ENCODE measurements at regions of chr12 and their contacts with region 1.

Region 1: GRCh38 chr12:63843721-63844390 is 644 bp upstream of the SRGAP1 start:
- DNase-seq: peak; percentile 84
- H3K4me3 ChIP-seq: peak overlapping the region; percentile 69 to 93
- H3K27ac ChIP-seq: peak overlapping the region; percentile 81 to 83
- H3K4me1 ChIP-seq: no peaks in the 10 kb centered on the region
- H3K27me3 ChIP-seq: no peaks in the 10 kb centered on the region
- CTCF ChIP-seq: peak; percentile 85 to 99 (median 96)
- POLR2A ChIP-seq: peak; percentile 31

Region 2: DNA sequence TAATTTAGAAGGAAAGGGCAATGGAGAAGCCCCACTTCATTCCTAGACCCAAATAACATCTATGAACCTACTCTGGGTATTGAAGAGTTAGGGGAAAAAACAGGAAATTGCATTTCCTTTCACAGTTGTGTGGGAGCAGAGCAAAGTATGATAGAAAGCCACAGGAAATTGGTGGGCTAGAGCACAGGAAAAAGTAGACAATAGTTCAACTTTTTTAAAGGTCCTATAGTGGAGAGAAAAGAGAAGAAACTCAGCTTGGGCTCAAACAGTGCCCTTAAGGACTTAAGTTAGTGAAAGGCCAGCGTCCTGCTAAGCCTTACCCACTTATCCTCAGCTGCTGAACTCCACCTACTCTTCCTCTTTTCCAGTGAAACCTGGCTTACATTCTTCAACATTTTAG is 433.7 kb before region 1 on chr12:
- intact Hi-C with region 1: no loop called
- DNase-seq: no peak
- H3K4me3 ChIP-seq: no peak overlapping the region
- H3K27ac ChIP-seq: no peak overlapping the region
- H3K4me1 ChIP-seq: no peaks in the 10 kb centered on the region
- H3K27me3 ChIP-seq: no peaks in the 10 kb centered on the region
- CTCF ChIP-seq: no peak
- POLR2A ChIP-seq: no peak

Region 3: GRCh38 chr12:63802012-63802608 is 41.7 kb before region 1 on chr12:
- intact Hi-C with region 1: no loop called
- DNase-seq: no peak
- H3K4me3 ChIP-seq: no peak overlapping the region
- H3K27ac ChIP-seq: no peak overlapping the region
- H3K4me1 ChIP-seq: peaks cover 4% of the 10 kb centered on the region
- H3K27me3 ChIP-seq: no peaks in the 10 kb centered on the region
- CTCF ChIP-seq: peak in 3 of 4 experiments; percentile 44 to 60 (median 58)
- POLR2A ChIP-seq: no peak

Region 4: DNA sequence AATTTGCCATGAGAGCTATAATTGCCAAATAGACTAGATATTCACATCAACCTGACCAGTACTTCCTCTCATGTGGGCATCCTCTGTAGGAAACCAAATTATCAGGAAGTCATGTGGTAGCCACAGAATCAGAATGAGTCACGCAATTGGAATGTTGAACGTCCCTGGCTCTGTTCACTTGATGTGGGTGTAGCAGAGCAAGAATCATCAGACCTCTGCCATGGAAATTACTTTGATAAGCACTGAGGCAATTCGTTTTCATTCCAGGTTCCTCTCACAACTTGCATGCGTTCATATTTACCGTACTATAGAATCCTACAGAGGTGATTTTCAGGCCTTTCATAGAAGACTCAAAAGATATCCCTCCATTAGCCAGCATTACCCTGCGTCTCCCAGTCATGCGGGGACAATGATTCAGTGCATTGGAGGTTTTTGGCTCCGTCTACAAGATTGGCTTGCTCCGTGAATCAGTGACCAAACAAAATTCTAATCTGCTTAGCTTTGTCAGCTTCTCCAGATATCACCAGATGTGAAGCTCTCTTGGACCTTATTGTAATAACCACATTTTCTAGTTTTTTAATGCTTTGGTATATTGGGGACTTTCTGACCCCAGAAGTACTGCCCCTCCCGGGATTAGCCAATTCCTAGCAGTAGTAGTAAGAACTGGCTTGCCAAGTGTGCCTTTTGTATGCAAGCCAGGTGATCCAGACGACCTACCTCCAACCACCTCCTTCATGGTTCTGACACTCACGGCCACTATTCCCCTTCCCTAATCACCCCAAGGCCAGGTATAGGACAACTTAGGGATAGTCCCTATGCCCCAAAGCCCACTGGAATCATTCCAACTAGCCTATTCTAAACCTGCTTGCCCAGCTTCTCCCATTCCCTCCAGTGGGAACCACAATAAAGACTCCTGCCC is 244.8 kb after region 1 on chr12:
- intact Hi-C with region 1: loop called (anchors 10 kb)
- DNase-seq: peak; percentile 71
- H3K4me3 ChIP-seq: no peak overlapping the region
- H3K27ac ChIP-seq: no peak overlapping the region
- H3K4me1 ChIP-seq: peaks cover under 1% of the 10 kb centered on the region
- H3K27me3 ChIP-seq: no peaks in the 10 kb centered on the region
- CTCF ChIP-seq: no peak
- POLR2A ChIP-seq: no peak

Region 5: DNA sequence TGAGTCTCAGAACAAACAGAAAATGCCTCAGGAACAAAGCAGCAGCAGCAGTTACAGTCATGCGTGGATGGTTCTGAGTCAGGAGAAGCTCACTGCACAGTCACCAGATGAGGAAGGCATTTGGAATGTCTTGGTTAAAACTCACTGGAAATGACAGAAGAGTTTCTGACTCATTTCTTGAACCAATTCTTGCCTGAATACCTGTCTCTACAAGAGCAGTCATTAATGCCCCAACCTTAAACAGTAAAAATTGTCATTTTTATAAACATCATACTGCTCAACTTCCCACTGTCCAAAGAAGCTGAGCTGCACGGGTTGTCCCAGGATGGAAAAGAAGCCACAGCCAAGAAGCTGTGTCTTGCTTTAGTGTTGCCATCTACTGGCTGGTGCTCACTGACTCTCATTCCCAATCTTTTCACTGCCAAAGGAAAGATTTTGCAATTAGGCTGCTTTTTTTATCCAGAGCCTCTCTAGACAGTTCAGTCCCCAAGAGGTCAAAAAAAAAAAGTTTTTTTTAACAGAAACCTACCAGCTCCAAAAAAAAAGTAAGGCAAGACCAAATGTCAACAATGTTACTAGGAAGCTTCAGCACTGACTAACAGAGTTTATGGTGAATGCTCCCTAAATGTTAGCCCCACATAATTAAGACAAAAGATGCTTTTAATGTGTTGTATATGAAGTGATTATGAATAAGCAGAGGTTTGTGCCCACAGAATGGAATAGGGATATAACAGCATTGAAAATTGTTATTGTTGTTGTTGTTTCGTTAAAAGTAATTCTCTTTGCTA is 337.8 kb after region 1 on chr12:
- intact Hi-C with region 1: loop called (anchors 1 kb)
- DNase-seq: peak; percentile 67
- H3K4me3 ChIP-seq: no peak overlapping the region
- H3K27ac ChIP-seq: peak overlapping the region in 1 of 2 donors; percentile 8
- H3K4me1 ChIP-seq: no peaks in the 10 kb centered on the region
- H3K27me3 ChIP-seq: no peaks in the 10 kb centered on the region
- CTCF ChIP-seq: peak; percentile 21 to 87 (median 59)
- POLR2A ChIP-seq: no peak

Region 6: GRCh38 chr12:64256166-64256800 is 412.4 kb after region 1 on chr12:
- intact Hi-C with region 1: loop called (anchors 2 kb)
- DNase-seq: peak; percentile 34
- H3K4me3 ChIP-seq: no peak overlapping the region
- H3K27ac ChIP-seq: no peak overlapping the region
- H3K4me1 ChIP-seq: no peaks in the 10 kb centered on the region
- H3K27me3 ChIP-seq: no peaks in the 10 kb centered on the region
- CTCF ChIP-seq: peak; percentile 51 to 83 (median 79)
- POLR2A ChIP-seq: no peak

Region 7: GRCh38 chr12:64403707-64404469 is 560.0 kb after region 1 on chr12 and contains the start of gene XPOT:
- intact Hi-C with region 1: loop called (anchors 10 kb)
- DNase-seq: peak; percentile 89
- H3K4me3 ChIP-seq: peak within 1 kb of the TSS; percentile 93 to 97
- H3K27ac ChIP-seq: peak within 1 kb of the TSS; percentile 95 to 98
- H3K4me1 ChIP-seq: peaks cover 3% of the 10 kb centered on the region
- H3K27me3 ChIP-seq: no peaks in the 10 kb centered on the region
- CTCF ChIP-seq: peak in 2 of 4 experiments; percentile 18 to 22
- POLR2A ChIP-seq: peak; percentile 38
- total RNA-seq, gene XPOT: 30.4 to 36.8 TPM

Measured in prostate gland (tissue), 2 donors.